HEK293 (cell line): ENCODE measurements at regions of chr17 and their contacts with region 1.

Region 1: GRCh38 chr17:40615295-40615988 is 32.2 kb downstream of the SMARCE1 start:
- H3K4me3 ChIP-seq: no peak overlapping the region
- H3K27ac ChIP-seq: no peak overlapping the region
- H3K4me1 ChIP-seq: no peaks in the 10 kb centered on the region
- CTCF ChIP-seq: peak; percentile 86

Region 2: DNA sequence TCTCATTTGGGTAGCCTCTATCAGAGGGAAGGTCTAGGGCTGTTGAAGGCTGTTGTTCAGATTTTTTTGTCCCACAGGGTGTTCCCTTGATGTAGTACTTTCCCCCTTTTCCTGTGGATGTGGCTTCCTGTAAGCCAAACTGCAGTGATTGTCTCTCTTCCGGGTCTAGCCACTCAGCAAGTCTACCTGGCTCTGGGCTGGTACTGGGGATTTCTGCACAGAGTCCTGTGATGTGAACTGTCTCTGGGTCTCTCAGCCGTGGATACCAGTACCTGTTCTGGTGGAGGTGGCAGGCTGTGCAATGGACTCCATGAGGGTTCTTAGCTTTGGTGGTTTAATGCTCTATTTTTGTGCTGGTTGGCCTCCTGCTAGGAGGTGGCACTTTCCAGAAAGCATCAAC is 26.9 kb before region 1 on chr17:
- CTCF ChIA-PET with region 1: interaction called, 10 read pairs
- POLR2A ChIA-PET with region 1: no interaction called
- H3K4me3 ChIP-seq: no peak overlapping the region
- H3K27ac ChIP-seq: no peak overlapping the region
- H3K4me1 ChIP-seq: no peaks in the 10 kb centered on the region
- CTCF ChIP-seq: no peak

Region 3: GRCh38 chr17:40602775-40603551 is 12.5 kb before region 1 on chr17:
- CTCF ChIA-PET with region 1: interaction called, 13 read pairs
- POLR2A ChIA-PET with region 1: interaction called, 4 read pairs
- H3K4me3 ChIP-seq: no peak overlapping the region
- H3K27ac ChIP-seq: no peak overlapping the region
- H3K4me1 ChIP-seq: no peaks in the 10 kb centered on the region
- CTCF ChIP-seq: no peak

Region 4: GRCh38 chr17:40633871-40634270 is 18.4 kb after region 1 on chr17:
- CTCF ChIA-PET with region 1: interaction called, 25 read pairs
- POLR2A ChIA-PET with region 1: no interaction called
- H3K4me3 ChIP-seq: no peak overlapping the region
- H3K27ac ChIP-seq: no peak overlapping the region
- H3K4me1 ChIP-seq: no peaks in the 10 kb centered on the region
- CTCF ChIP-seq: no peak

Region 5: DNA sequence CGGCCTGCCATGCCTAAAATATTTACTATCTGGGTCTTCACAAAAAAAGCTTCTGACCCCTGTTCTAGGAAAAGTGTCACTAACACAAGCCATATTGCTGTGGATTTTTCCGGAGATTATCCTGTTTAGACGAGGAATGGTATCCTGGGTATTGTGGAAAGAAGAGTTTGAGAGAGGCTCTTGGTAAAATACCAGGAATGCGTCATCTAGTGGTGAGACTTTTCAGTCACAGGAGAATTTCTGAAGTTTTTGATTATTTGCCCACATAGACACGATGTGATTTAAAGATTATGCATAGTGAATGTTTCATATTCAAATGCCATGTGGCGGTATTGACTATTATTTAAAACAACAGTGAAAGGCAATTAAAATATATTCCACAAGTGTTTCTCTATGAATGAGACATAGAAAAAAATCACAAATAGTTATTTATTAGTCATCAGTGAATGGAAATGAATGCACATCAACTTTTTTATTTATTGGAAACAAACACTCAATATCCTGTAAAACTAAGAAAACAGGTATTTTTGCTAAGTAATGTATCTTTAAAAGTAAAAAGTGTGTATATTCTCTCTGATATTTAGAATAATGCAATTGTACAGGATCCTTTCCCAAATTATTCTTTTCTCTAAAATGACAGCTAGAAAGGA is 176.5 kb after region 1 on chr17:
- CTCF ChIA-PET with region 1: interaction called, 26 read pairs
- POLR2A ChIA-PET with region 1: no interaction called
- H3K4me3 ChIP-seq: no peak overlapping the region
- H3K27ac ChIP-seq: no peak overlapping the region
- H3K4me1 ChIP-seq: no peaks in the 10 kb centered on the region
- CTCF ChIP-seq: no peak

Region 6: DNA sequence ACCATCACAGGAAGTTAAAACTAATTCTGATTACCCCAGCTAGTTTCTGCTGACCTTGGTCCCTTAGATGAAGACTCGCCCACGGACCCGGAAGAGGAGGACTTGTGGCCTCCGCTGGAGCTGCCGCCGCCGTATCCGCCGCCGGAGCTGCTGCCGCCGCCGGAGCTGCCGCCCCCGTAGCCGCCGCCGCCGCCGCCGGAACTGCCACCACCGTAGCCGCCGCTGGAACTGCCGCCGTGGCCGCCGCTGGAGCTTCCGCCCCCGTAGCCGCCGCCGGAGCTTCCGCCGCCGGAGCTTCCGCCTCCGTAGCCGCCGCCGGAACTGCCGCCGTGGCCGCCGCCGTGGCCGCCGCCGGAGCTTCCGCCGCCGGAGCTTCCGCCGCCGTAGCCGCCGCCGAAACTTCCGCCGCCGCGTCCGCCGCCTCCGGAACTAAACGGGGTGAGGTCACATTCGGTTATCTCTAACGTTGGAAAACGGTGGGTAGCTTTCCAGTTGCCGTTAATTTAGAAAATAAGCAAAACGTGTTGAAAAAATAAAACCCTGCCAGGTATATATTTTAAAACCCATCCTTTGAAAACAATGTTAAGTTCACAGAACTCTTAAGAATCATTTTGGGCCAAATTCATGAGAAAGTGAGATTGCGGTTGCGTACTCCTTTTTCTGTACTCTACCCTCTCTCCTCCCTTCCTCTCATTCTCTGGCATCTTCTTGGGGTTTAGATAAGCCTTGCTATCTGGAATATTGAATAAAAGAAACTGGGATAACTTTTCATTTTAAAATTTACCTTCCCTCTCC is 203.5 kb after region 1 on chr17:
- CTCF ChIA-PET with region 1: interaction called, 12 read pairs
- POLR2A ChIA-PET with region 1: no interaction called
- H3K4me3 ChIP-seq: peak overlapping the region; percentile 79
- H3K27ac ChIP-seq: peak overlapping the region; percentile 79
- H3K4me1 ChIP-seq: peaks cover 2% of the 10 kb centered on the region; the same call in 1 of the 2 replicates
- CTCF ChIP-seq: no peak

Region 7: GRCh38 chr17:40854159-40854814 is 238.8 kb after region 1 on chr17:
- CTCF ChIA-PET with region 1: interaction called, 17 read pairs
- POLR2A ChIA-PET with region 1: no interaction called
- H3K4me3 ChIP-seq: no peak overlapping the region
- H3K27ac ChIP-seq: no peak overlapping the region
- H3K4me1 ChIP-seq: peaks cover 5% of the 10 kb centered on the region
- CTCF ChIP-seq: no peak